PC-3 (cell line): ENCODE measurements at regions of chr4 and their contacts with region 1.

Region 1: DNA sequence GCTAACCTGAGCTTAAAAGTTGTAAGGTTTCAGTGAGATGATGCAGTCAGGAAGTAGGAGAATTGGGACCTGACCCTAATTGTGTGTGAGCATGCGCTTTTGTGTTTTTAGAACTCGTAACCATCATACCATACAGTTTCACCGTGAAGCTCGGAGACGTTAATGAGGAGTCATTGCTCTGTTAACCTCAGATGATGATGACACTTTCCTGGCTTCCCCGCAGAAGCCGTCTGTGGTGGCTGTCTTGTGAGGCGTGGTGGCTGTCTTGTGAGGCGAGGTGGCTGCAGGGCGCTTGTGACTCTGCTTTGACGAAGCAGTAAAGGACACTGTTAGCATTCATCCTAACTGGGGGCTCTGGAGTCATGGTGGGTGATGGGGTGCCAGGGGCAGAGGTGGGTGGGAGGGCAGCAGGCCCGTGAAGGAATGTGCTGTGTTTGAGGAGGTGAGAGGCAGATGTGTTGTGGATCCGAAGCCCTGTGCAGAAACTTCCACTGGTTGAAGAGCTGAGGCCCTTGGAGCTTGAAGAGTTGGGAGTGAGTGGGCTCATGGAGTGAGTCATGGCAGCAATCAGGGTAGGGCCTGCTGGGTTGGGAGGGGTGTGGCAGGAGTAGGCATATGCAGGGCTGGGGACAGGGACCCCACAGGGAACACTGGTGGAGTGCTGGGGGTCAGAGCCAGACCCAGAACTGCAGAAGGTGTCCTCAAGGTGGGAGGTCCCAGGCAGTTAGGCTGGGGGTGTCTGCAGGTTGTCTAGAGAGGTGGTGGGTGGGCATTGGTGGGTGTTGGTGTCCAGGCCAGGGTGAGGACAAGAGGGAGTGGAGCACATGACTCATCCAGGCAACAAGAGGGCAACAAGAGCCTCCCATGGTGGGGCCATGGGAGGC is 57.4 kb downstream of the NSD2 start:
- DNase-seq: no peak
- ATAC-seq: no peak
- H3K4me3 ChIP-seq: no peak overlapping the region
- H3K27ac ChIP-seq: no peak overlapping the region
- H3K4me1 ChIP-seq: no peaks in the 10 kb centered on the region
- H3K27me3 ChIP-seq: no peaks in the 10 kb centered on the region
- CTCF ChIP-seq: no peak

Region 2: DNA sequence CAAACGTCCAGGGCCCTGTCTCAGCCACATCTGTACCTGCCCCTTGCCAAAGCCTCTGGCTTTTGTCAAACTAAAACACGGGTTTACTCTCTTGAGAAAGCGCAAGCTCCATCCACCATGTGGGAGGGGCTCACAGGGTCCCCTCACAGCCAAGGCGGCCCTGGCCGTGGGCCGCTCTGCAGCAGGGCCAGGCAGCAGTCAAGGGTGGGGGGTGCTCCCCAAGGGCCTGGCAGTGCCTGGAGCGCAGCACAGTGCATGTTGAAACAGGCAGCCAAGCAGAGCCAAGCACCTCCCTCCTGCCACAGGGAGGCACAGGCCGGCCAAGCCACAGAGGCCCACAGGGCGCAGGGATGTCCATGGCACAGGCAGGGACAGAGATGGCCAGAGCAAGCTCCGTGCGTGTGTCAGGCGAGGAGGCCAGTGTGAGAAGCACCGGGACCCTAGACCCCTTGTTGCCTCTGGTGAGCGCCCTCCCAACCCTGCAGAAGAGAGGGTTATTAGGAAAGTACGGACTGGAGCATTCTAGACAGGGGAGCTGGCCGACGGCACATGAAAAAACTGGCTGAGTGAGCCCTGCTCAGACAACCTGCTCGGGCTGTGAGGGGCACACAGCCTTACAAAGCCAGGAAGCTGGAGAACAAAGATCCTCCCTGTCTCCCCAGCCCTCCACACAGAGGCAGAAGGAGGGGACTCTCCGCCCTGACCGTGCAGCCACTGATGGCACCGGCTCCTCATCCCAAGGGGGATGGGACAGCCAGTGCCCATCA is 283.5 kb before region 1 on chr4:
- CTCF ChIA-PET with region 1: no interaction called
- POLR2A ChIA-PET with region 1: no interaction called
- intact Hi-C with region 1: no loop called
- DNase-seq: no peak
- ATAC-seq: no peak
- H3K4me3 ChIP-seq: no peak overlapping the region
- H3K27ac ChIP-seq: no peak overlapping the region
- H3K4me1 ChIP-seq: no peaks in the 10 kb centered on the region
- H3K27me3 ChIP-seq: no peaks in the 10 kb centered on the region
- CTCF ChIP-seq: no peak

Region 3: DNA sequence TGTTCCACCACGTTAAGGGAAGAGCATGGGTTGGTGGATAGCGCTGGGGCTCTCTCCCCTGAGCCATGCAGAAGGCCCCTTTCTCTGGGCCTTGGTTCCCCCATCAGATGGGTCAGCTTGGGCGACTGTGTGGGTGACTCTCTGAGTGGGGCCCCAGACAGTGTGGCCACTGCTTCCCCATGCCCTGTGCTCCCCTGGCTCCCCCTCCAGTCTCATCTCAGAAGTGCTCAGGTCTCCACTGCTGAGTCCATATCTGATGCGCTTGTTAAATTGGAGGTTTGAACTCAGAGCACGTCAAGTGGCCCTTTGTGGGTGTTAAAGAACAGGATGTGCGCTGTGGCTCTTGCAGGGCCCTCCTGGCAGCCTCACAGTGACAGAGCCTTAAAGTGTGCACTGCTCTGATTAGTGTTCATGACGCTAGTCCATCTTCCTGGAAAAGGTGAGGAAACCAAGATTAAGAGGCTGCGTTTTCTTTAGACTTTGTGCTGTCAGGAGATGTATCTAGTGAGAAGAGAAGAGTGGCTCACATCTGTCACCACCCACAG is 20.4 kb after region 1 on chr4:
- CTCF ChIA-PET with region 1: interaction called, 10 read pairs
- POLR2A ChIA-PET with region 1: no interaction called
- intact Hi-C with region 1: no loop called
- DNase-seq: no peak
- ATAC-seq: no peak; the same call in 1 of the 2 replicates
- H3K4me3 ChIP-seq: no peak overlapping the region
- H3K27ac ChIP-seq: no peak overlapping the region
- H3K4me1 ChIP-seq: no peaks in the 10 kb centered on the region
- H3K27me3 ChIP-seq: no peaks in the 10 kb centered on the region
- CTCF ChIP-seq: no peak